Mammary epithelial cell (primary cell): ENCODE measurements at regions of chr1 and their contacts with region 1.

Region 1: GRCh38 chr1:14733048-14733778 is 134.7 kb downstream of the KAZN start:
- DNase-seq: peak; percentile 96
- H3K4me3 ChIP-seq: peak overlapping the region; percentile 1 to 26 (median 9)
- H3K27ac ChIP-seq: peak overlapping the region; percentile 98
- H3K4me1 ChIP-seq: peaks cover 27% of the 10 kb centered on the region
- H3K27me3 ChIP-seq: no peaks in the 10 kb centered on the region
- CTCF ChIP-seq: no peak

Region 2: DNA sequence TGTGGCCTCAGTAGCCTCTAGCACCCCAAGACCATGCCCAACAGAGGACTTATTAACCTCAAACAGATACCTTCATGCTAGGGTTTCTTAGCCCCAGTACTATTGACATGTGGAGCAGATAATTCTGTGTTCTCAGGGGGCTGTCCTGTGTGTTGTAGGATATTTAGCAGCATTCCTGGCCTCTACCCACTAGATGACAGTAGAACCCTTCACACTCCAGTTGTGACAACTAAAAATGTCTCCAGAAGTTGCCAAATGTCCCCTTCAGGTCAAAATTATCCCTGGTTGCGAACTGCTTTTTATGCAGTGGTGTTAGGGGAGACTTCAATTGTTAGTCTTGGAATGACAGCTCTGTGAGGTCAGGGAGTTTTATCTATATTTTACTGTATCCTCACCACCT is 126.6 kb before region 1 on chr1:
- CTCF ChIA-PET with region 1: no interaction called
- dilution Hi-C with region 1: no loop called
- in situ Hi-C with region 1: no loop called
- intact Hi-C with region 1: loop called (anchors 1 kb)
- DNase-seq: no peak
- H3K4me3 ChIP-seq: no peak overlapping the region
- H3K27ac ChIP-seq: no peak overlapping the region
- H3K4me1 ChIP-seq: no peaks in the 10 kb centered on the region
- H3K27me3 ChIP-seq: no peaks in the 10 kb centered on the region
- CTCF ChIP-seq: peak; percentile 49 to 89

Region 3: DNA sequence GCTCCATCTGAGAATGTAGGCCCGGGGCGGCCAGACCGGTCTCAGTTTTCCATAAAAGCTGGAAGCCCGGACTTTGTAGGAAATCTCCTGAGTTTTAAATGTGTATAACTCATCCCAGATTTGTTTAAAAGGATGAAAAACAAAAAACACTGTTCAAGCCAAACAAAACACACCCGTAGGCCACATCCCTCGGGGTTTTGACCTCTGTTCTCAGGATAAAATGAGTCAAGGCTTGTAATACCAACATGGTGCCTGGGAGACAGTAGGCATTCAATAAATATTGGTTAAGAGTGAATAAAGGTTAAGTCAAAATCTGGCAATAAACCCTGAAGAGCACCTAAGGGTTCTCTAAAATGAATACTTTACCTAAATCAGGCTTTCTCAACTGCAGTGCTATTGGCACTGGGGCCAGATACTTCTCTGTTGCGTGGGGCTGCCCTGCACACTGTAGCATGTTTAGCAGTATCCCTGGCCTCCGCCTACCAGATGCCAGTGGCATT is 79.7 kb before region 1 on chr1:
- CTCF ChIA-PET with region 1: no interaction called
- dilution Hi-C with region 1: no loop called
- in situ Hi-C with region 1: no loop called
- intact Hi-C with region 1: no loop called
- DNase-seq: peak; percentile 38
- H3K4me3 ChIP-seq: no peak overlapping the region
- H3K27ac ChIP-seq: no peak overlapping the region
- H3K4me1 ChIP-seq: no peaks in the 10 kb centered on the region
- H3K27me3 ChIP-seq: no peaks in the 10 kb centered on the region
- CTCF ChIP-seq: no peak

Region 4: DNA sequence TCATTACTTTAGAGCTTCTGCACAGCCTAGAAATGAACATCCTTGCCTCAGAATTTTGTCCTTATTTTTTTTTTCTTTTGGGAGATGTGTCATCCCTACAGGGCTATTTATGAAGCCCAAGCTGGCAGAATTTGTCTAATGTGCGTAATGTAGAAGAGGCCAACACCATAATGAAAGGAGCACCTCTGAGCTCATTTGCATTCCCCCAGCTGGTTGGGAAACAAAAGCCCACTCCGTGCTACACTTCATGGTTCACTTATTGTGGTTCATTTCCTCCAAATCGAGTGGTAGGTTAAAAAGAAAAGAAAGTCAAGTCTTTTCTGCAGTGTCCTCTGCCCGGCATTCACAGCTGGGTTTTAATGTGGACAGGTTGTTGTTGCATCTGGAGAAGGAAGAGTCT is 61.2 kb before region 1 on chr1:
- CTCF ChIA-PET with region 1: no interaction called
- dilution Hi-C with region 1: no loop called
- in situ Hi-C with region 1: no loop called
- intact Hi-C with region 1: no loop called
- DNase-seq: no peak
- H3K4me3 ChIP-seq: no peak overlapping the region
- H3K27ac ChIP-seq: no peak overlapping the region
- H3K4me1 ChIP-seq: no peaks in the 10 kb centered on the region
- H3K27me3 ChIP-seq: no peaks in the 10 kb centered on the region
- CTCF ChIP-seq: no peak

Region 5: GRCh38 chr1:14765773-14766172 is 32.6 kb after region 1 on chr1:
- CTCF ChIA-PET with region 1: no interaction called
- dilution Hi-C with region 1: no loop called
- in situ Hi-C with region 1: no loop called
- intact Hi-C with region 1: loop called (anchors 2 kb)
- DNase-seq: peak; percentile 95
- H3K4me3 ChIP-seq: no peak overlapping the region
- H3K27ac ChIP-seq: no peak overlapping the region
- H3K4me1 ChIP-seq: peaks cover 5% of the 10 kb centered on the region
- H3K27me3 ChIP-seq: no peaks in the 10 kb centered on the region
- CTCF ChIP-seq: no peak

Region 6: GRCh38 chr1:14913482-14914177 is 180.4 kb after region 1 on chr1:
- CTCF ChIA-PET with region 1: no interaction called
- dilution Hi-C with region 1: no loop called
- in situ Hi-C with region 1: no loop called
- intact Hi-C with region 1: loop called (anchors 2 kb)
- DNase-seq: peak; percentile 85
- H3K4me3 ChIP-seq: no peak overlapping the region
- H3K27ac ChIP-seq: peak overlapping the region; percentile 77
- H3K4me1 ChIP-seq: peaks cover 40% of the 10 kb centered on the region
- H3K27me3 ChIP-seq: no peaks in the 10 kb centered on the region
- CTCF ChIP-seq: no peak

Region 7: DNA sequence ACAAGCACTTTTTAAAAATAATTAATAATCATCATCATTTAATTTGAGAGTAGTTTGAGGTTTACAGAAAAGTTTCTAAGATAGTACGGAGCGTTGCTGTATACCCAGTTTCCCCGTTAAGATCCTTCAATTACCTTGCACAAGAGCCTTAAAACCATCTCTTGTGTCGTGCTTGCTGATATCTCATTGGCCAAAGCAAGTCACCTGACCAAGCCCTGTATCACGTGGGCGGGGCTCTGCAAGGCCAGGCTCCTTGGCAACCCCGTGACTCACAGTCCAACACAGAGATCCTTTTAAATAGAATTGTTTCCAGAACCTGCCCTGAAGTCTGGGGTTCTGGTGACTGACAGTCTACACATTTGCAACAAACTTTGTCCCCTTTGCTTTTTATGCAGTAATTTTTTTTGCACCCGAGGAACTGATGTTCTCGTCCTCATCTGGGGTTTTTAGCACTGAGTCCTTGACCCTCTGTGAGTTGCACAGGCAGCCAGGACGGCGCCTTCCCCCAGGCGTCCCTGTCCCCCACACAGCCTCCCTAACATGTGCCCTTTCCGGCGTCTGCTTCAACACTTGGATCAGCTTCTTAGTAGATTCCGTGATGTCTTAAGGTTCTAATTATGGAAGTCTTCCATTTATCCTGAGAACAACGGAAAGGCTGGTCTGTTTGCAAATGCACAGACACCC is 237.0 kb after region 1 on chr1:
- CTCF ChIA-PET with region 1: no interaction called
- dilution Hi-C with region 1: no loop called
- in situ Hi-C with region 1: no loop called
- intact Hi-C with region 1: no loop called
- DNase-seq: peak; percentile 80
- H3K4me3 ChIP-seq: no peak overlapping the region
- H3K27ac ChIP-seq: peak overlapping the region; percentile 11
- H3K4me1 ChIP-seq: peaks cover 35% of the 10 kb centered on the region
- H3K27me3 ChIP-seq: no peaks in the 10 kb centered on the region
- CTCF ChIP-seq: no peak